HEK293 (cell line): ENCODE measurements at regions of chr14 and their contacts with region 1.

Region 1: DNA sequence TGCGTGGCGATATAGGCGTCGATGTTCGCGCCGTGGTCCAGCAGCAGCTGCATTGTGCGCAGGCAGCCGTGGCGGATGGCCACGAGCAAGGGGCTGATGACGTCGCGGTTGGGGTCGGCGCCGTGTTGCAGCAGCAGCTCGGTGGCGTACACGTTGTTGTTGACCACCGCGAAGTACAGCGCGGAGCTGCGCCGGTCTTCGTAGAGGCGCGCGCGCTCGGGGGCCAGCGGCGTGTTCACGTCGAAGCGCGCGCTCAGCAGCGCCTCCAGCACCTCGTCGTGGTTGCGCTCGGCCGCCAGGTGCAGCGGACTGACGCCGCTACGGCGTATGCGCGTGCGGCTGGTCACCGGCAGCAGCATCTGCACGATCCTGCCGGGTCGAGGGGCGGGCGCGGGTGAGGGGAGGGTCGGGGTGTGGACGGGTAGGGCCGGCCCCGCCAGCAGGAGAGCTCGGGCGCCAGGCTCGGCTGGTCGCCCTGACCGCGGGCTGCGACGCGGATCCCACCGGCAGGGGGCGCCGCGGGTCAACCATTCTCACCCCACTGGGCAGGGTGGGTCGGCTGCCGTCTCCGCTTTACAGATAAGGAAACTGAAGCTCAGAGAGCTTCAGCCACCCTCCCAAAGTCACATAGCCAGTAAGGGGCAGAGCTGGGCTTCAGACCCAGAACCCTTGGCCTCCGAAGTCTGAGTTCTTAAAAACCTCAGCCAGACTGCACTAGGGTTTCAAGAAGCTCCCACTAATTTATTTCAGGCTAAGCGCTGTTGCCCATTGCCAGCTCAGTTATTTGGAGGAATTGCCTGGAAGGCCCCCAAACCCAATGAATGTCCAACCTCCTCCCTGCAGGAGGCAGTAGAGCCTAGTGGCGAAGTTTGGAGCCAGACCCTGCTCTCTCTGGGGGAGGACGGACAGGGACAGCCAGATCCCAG is 12.4 kb downstream of the FAM181A start:
- H3K4me3 ChIP-seq: peak overlapping the region; percentile 34
- H3K27ac ChIP-seq: no peak overlapping the region
- H3K4me1 ChIP-seq: peaks cover 14% of the 10 kb centered on the region
- CTCF ChIP-seq: peak; percentile 53; the same call in 1 of the 2 replicates

Region 2: GRCh38 chr14:93880021-93880820 is 59.3 kb before region 1 on chr14:
- CTCF ChIA-PET with region 1: no interaction called
- POLR2A ChIA-PET with region 1: no interaction called
- H3K4me3 ChIP-seq: no peak overlapping the region
- H3K27ac ChIP-seq: no peak overlapping the region
- H3K4me1 ChIP-seq: peaks cover 9% of the 10 kb centered on the region
- CTCF ChIP-seq: no peak

Region 3: DNA sequence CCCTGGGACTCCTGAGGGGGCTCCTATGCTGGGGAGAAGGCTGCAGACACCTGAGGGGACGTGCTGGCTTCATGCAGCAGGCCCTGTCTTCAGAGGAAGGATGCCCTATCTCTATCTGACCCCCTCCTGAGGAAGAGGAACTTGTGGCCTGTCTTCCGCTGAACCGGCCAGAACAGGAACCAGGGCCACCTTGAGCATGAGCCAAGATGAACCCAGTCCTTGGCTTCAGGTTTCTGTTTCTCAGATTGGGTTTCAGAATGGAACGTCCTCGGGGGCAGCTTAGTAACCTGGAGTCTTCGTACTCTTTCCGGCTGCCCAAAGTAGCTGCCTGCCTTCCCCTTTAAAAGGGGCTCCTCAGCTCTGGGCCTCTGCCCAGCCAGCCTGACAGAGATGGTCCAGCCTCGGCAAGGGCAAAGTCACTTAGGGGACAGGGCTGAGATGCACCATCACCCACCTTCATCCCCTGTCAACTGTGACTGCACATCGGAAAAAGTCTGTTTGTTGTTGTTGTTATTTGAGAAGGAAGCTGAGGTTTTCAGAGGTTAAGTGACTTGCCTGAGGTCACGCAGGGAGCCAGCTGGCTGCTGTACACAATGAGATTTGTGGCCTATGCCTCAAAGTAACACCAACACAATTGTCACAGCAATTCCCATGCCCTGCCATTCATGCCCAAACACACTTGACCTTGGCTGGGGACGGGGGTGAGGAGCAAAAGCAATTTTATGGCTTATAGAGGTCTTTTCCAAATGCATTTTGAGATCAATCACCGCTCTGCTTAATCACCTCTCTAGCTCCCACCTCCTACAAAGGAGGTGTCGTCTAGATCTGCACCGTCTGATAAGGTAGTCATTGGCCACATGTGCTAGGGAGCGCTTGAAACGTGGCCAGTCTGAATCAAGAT is 23.4 kb after region 1 on chr14:
- CTCF ChIA-PET with region 1: interaction called, 91 read pairs
- POLR2A ChIA-PET with region 1: no interaction called
- H3K4me3 ChIP-seq: no peak overlapping the region
- H3K27ac ChIP-seq: no peak overlapping the region
- H3K4me1 ChIP-seq: peaks cover 10% of the 10 kb centered on the region
- CTCF ChIP-seq: no peak

Region 4: DNA sequence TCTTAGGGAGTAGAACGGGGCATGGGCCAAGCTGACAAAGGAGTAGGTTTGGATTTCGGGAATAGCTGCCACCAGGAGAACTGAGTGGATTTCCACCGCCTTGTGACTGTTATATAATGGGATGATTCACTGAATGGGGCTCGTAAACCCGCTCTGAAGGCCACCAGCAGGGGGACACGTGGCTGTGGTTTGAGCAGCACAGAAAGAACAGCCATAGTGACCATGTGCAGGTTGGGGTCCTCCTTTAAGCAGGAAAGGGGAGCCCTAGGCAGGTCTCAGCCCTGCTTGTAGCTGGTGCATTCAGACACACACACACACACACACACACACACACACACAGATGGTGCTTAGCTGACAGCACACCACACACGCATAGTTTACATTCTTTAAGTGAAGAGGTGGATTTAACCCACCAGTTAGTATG is 45.4 kb after region 1 on chr14:
- CTCF ChIA-PET with region 1: interaction called, 27 read pairs
- POLR2A ChIA-PET with region 1: no interaction called
- H3K4me3 ChIP-seq: no peak overlapping the region
- H3K27ac ChIP-seq: no peak overlapping the region; the same call in 1 of the 2 replicates
- H3K4me1 ChIP-seq: no peaks in the 10 kb centered on the region
- CTCF ChIP-seq: peak; percentile 82; the same call in 1 of the 2 replicates

Region 5: GRCh38 chr14:94001501-94002396 is 62.2 kb after region 1 on chr14:
- CTCF ChIA-PET with region 1: interaction called, 111 read pairs
- POLR2A ChIA-PET with region 1: interaction called, 3 read pairs
- H3K4me3 ChIP-seq: no peak overlapping the region
- H3K27ac ChIP-seq: no peak overlapping the region
- H3K4me1 ChIP-seq: no peaks in the 10 kb centered on the region; the same call in 1 of the 2 replicates
- CTCF ChIP-seq: peak; percentile 75

Region 6: GRCh38 chr14:94136575-94137331 is 197.2 kb after region 1 on chr14:
- CTCF ChIA-PET with region 1: interaction called, 31 read pairs
- POLR2A ChIA-PET with region 1: no interaction called
- H3K4me3 ChIP-seq: no peak overlapping the region
- H3K27ac ChIP-seq: no peak overlapping the region
- H3K4me1 ChIP-seq: no peaks in the 10 kb centered on the region
- CTCF ChIP-seq: peak; percentile 89

Region 7: DNA sequence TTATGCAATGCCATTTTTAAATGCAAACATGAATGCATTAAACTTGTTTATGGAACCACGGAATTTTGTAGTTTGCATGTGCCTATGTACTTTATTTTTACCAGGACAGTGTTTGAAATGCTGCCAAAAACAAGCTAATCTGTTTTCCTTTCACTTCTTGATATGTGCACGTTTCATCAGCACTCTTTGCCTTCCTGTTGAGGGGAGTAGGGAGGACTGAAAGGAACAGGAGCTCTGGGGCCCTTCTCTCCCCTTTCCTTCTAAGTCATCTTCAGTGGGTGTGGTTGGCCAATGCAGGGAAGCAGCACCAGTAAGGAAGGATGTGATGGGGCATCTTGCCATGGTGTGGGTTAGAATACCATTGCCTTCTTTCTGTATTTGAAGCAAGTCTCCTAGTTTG is 222.4 kb after region 1 on chr14:
- CTCF ChIA-PET with region 1: no interaction called
- POLR2A ChIA-PET with region 1: no interaction called
- H3K4me3 ChIP-seq: no peak overlapping the region
- H3K27ac ChIP-seq: no peak overlapping the region
- H3K4me1 ChIP-seq: no peaks in the 10 kb centered on the region; the same call in 1 of the 2 replicates
- CTCF ChIP-seq: no peak